ENCODE measurements at regions of chr11 and their contacts with region 1.

Region 1: GRCh38 chr11:4187055-4187988 is 92.7 kb downstream of the RRM1 start:
- DNase-seq: peak; percentile 77
- H3K27ac ChIP-seq: peak overlapping the region; percentile 24
- CTCF ChIP-seq: peak; percentile 81

Region 2: DNA sequence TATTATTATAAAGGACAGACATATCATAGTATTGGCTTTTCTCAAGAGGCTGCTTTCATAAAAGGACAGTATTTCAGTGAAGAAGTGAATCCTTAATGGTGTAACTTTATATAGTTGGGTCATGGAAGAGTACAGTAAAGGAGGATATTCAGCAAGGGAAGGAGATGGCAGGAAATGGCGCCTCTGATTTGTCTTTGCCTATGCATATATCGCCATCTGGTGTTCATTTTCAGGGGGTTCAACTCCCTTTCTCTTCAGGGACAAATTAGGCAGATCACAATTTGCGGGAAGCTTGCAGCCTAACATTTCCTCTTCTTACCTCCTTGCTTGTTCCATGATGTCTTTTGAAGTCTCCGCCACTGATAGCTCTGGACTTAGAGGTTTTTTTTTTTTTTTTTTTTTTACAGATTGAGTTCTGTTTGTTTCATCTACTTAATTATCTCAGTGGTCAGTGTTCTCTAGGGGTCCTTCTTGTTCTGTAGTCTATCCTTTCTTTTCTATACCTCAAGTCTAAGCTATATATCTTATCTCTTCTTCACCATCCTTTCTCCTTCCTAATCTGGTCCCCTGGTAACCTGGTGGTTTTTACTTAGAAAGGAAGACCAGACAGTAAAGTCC is 114.5 kb before region 1 on chr11:
- CTCF ChIA-PET with region 1: no interaction called
- POLR2A ChIA-PET with region 1: no interaction called
- DNase-seq: peak; percentile 67
- H3K27ac ChIP-seq: no peak overlapping the region
- CTCF ChIP-seq: peak; percentile 77

Region 3: DNA sequence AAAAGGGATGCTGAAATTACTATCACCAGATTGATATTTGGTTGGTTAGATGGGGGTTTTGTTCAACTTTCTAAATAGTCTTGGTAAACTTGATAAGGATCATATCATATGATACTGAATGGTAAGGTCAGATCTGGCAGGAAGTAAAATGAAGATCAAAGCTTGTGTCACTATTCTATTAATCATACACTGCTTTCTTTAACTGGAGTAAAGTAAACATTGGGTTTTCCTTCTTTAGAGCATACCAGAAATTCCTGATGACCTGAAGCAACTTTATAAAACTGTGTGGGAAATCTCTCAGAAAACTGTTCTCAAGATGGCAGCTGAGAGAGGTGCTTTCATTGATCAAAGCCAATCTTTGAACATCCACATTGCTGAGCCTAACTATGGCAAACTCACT is 52.5 kb before region 1 on chr11:
- CTCF ChIA-PET with region 1: no interaction called
- POLR2A ChIA-PET with region 1: no interaction called
- DNase-seq: peak; percentile 14
- H3K27ac ChIP-seq: no peak overlapping the region
- CTCF ChIP-seq: no peak

Region 4: DNA sequence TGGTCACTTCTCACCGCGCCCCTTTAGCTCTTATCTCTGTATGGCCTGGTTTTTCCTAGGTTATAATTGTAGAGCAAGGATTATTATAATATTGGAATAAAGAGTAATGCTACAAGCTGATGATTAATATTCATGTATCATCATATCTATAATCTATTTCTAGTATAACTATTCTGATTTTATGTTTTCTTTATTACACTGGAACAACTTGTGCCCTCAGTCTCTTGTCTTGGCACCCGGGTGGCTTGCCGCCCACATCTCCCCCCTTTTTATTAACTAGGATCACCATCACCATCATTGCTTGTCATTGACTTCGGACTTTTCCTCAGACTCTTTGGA is 306.1 kb after region 1 on chr11:
- CTCF ChIA-PET with region 1: interaction called, 43 read pairs
- POLR2A ChIA-PET with region 1: no interaction called
- DNase-seq: no peak
- H3K27ac ChIP-seq: no peak overlapping the region
- CTCF ChIP-seq: peak; percentile 9; the same call in 1 of the 2 replicates

Region 5: GRCh38 chr11:4539603-4540219 is 352.4 kb after region 1 on chr11:
- CTCF ChIA-PET with region 1: interaction called, 19 read pairs
- POLR2A ChIA-PET with region 1: no interaction called
- DNase-seq: peak; percentile 38
- H3K27ac ChIP-seq: no peak overlapping the region
- CTCF ChIP-seq: peak; percentile 33; the same call in 1 of the 2 replicates

Measured in RWPE1 (cell line).